Activated B cell treated with CpG ODN at 0.5 μM for 24 hours (primary cell): ENCODE measurements at regions of chr19 and their contacts with region 1.

Region 1: DNA sequence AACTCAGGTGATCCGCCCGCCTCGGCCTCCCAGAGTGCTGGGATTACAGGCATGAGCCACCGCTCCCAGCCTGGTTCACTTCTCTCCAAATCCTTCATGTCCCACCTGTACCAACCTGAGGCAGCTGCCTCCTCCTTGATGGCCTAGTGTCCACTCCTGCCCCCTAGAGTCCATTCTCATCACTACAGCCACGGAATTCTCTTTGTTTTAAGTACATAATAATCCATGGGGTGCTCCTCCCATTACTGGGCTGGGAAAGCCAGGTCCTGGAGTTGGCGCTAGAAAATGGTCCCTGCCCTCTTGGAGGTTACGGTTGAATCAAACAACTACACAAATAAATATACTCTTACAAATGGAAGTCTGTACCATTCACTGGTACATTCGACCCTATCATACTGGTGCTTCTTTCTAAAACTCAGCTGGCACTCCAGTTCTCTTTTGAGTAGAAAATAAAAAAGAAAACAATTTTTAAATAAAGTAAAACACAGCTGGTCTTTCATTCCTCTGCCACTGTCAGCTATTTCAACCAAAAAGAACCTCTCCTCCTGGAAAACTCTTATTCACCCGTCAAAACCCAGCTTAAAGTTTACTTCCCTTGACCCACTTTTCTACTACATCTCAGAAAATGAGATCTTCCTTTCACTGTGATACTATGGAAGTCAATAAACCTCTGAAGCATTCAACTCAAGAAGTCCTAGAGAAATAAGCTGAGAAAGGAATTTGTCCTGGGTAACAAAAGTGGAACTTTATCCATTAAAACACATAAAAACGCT is 22.4 kb upstream of the ARHGEF18 start:
- DNase-seq: no peak
- ATAC-seq: no peak
- H3K4me3 Mint-ChIP-seq: no peak overlapping the region
- H3K27ac Mint-ChIP-seq: peak overlapping the region; percentile 25
- H3K4me1 Mint-ChIP-seq: peaks cover 7% of the 10 kb centered on the region
- H3K27me3 Mint-ChIP-seq: no peaks in the 10 kb centered on the region
- CTCF ChIP-seq: no peak

Region 2: DNA sequence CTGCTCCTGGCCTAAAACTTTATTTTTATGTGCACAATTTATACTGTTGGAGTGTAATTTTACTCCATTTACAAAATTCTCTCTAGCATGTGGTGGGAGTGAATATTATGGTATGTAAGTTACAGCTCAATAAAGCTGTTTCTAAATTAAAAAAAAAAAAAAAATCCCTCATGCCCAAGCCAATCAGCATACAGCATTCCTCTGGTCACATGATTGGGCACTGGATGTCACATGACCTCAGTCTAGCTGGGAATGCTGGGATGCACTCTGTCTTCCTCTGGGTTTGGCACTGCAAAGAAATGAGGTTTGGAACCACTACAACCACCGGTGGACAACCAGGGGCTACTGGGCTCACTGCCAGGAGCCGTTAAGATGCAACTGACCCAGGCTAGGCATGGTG is 189.2 kb before region 1 on chr19:
- CTCF ChIA-PET with region 1: no interaction called
- POLR2A ChIA-PET with region 1: no interaction called
- intact Hi-C with region 1: no loop called
- DNase-seq: no peak
- ATAC-seq: no peak
- H3K4me3 Mint-ChIP-seq: no peak overlapping the region
- H3K27ac Mint-ChIP-seq: no peak overlapping the region
- H3K4me1 Mint-ChIP-seq: no peaks in the 10 kb centered on the region
- H3K27me3 Mint-ChIP-seq: peaks cover under 1% of the 10 kb centered on the region
- CTCF ChIP-seq: no peak

Region 3: GRCh38 chr19:7152568-7152967 is 173.7 kb before region 1 on chr19:
- CTCF ChIA-PET with region 1: interaction called, 14 read pairs
- POLR2A ChIA-PET with region 1: no interaction called
- intact Hi-C with region 1: loop called (anchors 1 kb)
- DNase-seq: no peak
- ATAC-seq: no peak
- H3K4me3 Mint-ChIP-seq: no peak overlapping the region
- H3K27ac Mint-ChIP-seq: no peak overlapping the region
- H3K4me1 Mint-ChIP-seq: peaks cover 5% of the 10 kb centered on the region
- H3K27me3 Mint-ChIP-seq: no peaks in the 10 kb centered on the region
- CTCF ChIP-seq: no peak

Region 4: GRCh38 chr19:7312816-7313215 is 13.5 kb before region 1 on chr19:
- CTCF ChIA-PET with region 1: no interaction called
- POLR2A ChIA-PET with region 1: no interaction called
- intact Hi-C with region 1: no loop called
- DNase-seq: no peak
- ATAC-seq: no peak
- H3K4me3 Mint-ChIP-seq: no peak overlapping the region
- H3K27ac Mint-ChIP-seq: no peak overlapping the region
- H3K4me1 Mint-ChIP-seq: no peaks in the 10 kb centered on the region
- H3K27me3 Mint-ChIP-seq: no peaks in the 10 kb centered on the region
- CTCF ChIP-seq: no peak

Region 5: GRCh38 chr19:7355151-7355820 is 29.0 kb after region 1 on chr19:
- CTCF ChIA-PET with region 1: interaction called, 11 read pairs
- POLR2A ChIA-PET with region 1: interaction called, 5 read pairs
- intact Hi-C with region 1: no loop called
- DNase-seq: no peak
- ATAC-seq: no peak
- H3K4me3 Mint-ChIP-seq: peak overlapping the region; percentile 41
- H3K27ac Mint-ChIP-seq: peak overlapping the region; percentile 86
- H3K4me1 Mint-ChIP-seq: peaks cover 82% of the 10 kb centered on the region
- H3K27me3 Mint-ChIP-seq: no peaks in the 10 kb centered on the region
- CTCF ChIP-seq: no peak

Region 6: DNA sequence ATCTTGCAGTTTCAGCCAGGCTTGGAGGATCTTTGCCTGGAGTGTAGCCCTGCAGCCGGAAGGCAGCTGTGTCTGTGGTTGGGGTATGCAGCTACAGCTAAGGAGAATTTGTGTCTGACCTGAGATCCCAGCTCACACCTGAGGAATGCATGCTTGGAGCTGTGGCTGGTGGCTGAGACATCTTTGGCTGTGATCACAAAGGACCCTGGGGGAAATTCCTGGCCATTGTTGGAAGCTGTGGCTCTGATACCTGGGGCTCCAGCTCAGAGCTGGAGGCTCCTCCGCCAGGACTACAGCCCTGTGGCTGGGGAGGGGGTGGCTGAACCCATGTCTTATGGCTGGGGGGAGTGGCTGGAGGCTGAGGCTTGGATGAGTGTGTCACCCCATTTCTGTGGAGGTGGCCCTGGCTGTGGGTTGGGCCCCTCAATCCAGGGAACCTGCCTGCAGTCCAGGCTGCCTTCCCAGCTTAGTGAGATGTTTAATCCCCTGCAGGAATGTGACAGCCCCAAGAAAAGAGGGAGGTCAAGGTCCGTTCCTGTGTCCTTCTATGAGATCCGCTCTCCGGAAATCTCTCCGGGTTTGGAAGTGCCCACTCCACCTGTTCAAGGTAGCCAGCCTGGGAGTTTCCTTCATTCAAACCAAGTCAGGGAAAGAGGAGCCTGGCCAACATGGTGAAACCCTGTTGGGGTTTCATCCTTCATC is 50.0 kb after region 1 on chr19:
- CTCF ChIA-PET with region 1: interaction called, 15 read pairs
- POLR2A ChIA-PET with region 1: no interaction called
- intact Hi-C with region 1: loop called (anchors 1 kb)
- DNase-seq: no peak
- ATAC-seq: no peak
- H3K4me3 Mint-ChIP-seq: no peak overlapping the region
- H3K27ac Mint-ChIP-seq: peak overlapping the region; percentile 41
- H3K4me1 Mint-ChIP-seq: peaks cover 8% of the 10 kb centered on the region
- H3K27me3 Mint-ChIP-seq: no peaks in the 10 kb centered on the region
- CTCF ChIP-seq: no peak

Region 7: DNA sequence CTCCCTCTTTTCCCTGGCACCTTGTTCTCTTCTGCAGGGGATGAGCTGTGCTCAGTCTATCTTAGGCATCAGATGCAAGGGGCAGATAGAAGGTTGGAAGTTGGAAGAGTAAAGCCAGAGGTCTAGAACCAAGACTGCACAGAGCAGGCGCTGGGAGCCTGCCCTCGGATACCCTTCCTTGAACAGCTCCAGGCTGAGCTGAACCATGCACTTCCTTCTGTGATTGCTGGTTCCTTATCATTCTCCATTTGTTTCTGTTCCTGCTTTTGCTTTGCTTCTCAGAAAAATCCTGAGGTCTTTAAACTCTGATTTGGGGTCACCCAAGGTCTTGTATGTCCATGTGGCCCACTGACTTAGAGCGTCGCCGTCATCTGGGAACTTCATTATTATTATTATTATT is 58.8 kb after region 1 on chr19:
- CTCF ChIA-PET with region 1: interaction called, 15 read pairs
- POLR2A ChIA-PET with region 1: no interaction called
- intact Hi-C with region 1: loop called (anchors 1 kb)
- DNase-seq: no peak
- ATAC-seq: no peak
- H3K4me3 Mint-ChIP-seq: no peak overlapping the region
- H3K27ac Mint-ChIP-seq: peak overlapping the region; percentile 66
- H3K4me1 Mint-ChIP-seq: peaks cover 26% of the 10 kb centered on the region
- H3K27me3 Mint-ChIP-seq: no peaks in the 10 kb centered on the region
- CTCF ChIP-seq: no peak

Region 8: GRCh38 chr19:7488736-7489353 is 162.6 kb after region 1 on chr19 and contains the start of gene PEX11G:
- CTCF ChIA-PET with region 1: no interaction called
- POLR2A ChIA-PET with region 1: no interaction called
- intact Hi-C with region 1: no loop called
- DNase-seq: peak; percentile 98
- ATAC-seq: peak; percentile 99
- H3K4me3 Mint-ChIP-seq: peak within 1 kb of the TSS; percentile 79
- H3K27ac Mint-ChIP-seq: peak within 1 kb of the TSS; percentile 69
- H3K4me1 Mint-ChIP-seq: peaks cover 10% of the 10 kb centered on the region
- H3K27me3 Mint-ChIP-seq: peaks cover 3% of the 10 kb centered on the region
- CTCF ChIP-seq: no peak
- total RNA-seq, gene PEX11G: 0.61 and 1.0 TPM in 2 replicates